Head of caudate nucleus (tissue), 42 donors: ENCODE measurements at regions of chr4 and their contacts with region 1.

Region 1: GRCh38 chr4:10157478-10158332 is 41.1 kb upstream of the WDR1 start:
- DNase-seq: peak; percentile 13 to 84 (median 62)

Region 2: DNA sequence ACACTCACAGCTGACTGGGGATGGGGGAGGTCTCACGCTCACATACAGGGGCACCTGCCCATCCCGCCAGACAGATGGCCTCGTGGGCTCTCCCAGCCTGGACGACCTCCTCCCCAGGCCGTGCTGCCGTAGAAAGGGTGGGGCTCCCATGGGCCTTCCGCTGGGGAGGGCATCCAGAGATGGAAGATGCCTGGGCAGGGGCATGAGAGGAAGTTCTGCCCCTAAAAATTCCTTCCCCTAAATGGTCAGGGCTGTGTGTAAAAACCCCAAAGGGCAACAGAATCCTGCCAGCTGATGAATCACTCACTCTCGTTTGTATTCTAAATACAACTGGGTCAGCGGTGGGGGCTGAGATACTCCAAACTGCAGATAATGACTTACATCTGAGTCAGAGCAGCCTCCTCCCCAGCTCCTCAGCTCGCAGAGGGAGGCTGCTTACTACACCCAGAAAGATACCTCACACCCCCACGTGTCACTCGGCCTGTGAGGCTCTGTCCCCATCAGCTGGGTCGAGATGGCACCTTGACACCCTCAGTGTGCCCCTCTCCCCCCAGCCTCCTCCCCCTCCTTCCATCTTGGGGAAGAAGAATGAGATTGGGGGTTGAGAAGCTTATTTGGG is 51.2 kb before region 1 on chr4:
- intact Hi-C with region 1: no loop called
- DNase-seq: peak; percentile 39 to 97 (median 76)

Region 3: GRCh38 chr4:10554694-10555093 is 397.0 kb after region 1 on chr4:
- intact Hi-C with region 1: loop called (anchors 5 kb)
- DNase-seq: peak in 35 of 42 donors; percentile 17 to 85 (median 57)